ENCODE measurements at regions of chr6 and their contacts with region 1.

Region 1: GRCh38 chr6:141483598-141484061 is 649.1 kb upstream of the GJE1 start:
- DNase-seq: no peak

Region 2: DNA sequence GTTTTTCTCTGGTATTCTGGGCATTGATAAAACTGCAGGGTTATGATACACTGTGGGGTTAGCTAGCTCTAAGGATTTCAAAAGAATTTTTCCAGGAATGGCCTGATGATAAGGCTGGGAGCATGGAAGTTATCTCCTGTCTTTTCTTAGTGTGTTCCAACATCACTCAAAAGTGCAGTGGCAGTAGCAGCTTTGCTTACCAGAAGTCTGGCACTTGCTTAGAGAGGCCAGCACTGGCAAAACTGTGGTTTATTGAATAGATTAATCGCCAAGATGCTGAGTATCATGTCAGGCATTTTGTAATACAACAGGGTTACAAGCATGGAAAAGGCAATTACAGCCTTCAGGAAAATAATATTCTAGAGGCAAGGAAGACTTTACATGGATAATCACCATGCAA is 70.4 kb before region 1 on chr6:
- intact Hi-C with region 1: no loop called
- DNase-seq: no peak

Region 3: GRCh38 chr6:141437685-141438084 is 45.9 kb before region 1 on chr6:
- intact Hi-C with region 1: no loop called
- DNase-seq: no peak

Region 4: GRCh38 chr6:141552473-141552878 is 68.8 kb after region 1 on chr6:
- intact Hi-C with region 1: loop called (anchors 5 kb)
- DNase-seq: no peak

Region 5: DNA sequence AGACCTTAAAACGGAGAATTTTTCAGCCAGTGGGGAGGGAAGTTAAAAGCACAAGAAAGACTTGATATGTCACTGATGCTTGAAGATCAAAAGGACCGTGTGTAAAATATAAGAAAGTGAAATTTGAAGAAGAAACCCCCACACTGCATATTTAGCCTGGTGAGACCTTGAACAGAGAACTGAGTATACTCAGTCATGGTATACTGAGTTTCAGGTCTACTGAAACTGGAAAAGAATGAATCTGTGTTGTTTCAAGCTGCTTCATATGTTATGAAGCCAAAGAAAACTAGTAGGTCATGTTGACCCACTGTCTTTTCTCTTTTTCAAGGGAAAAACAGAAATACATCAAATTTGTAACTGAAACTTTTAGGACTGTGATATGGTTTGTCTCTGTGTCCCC is 205.3 kb after region 1 on chr6:
- intact Hi-C with region 1: no loop called
- DNase-seq: no peak

Measured in cardiac septum (tissue), 1 donor.